ENCODE measurements at regions of chr3 and their contacts with region 1.

Region 1: DNA sequence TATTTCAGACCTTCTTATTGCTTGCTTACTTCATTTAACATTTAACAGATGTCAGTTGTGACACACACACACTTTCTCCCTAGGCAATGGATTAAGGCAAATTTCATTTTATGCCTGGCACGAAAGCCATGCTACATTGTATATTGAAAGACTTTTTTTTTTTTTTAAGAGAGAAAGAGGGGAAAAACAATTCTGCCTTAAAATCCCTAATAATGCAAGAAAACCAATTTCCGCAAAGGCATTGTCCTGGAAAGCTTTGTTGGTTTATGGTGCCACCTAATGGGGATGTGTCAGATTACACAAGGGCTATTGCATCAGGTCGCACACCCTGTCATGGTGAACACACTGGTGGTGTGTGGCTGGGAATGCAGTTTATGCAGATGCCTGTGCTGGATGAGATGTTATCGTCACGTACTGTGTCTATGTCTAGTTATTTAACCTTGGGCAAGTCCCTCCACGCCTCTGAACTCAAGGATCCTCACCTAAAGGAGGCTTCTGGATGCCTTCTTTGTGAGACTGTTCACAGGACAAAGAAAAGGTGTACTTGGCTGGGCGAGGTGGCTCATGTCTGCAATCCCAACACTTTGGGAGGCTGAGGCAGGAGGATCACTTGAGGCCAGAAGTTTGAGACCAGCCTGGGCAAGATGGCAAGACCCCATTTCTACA is 37.3 kb upstream of the RFTN1 start:
- DNase-seq: peak; percentile 60
- CTCF ChIP-seq: peak; percentile 82

Region 2: GRCh38 chr3:16279010-16279801 is 271.6 kb before region 1 on chr3:
- in situ Hi-C with region 1: loop called (anchors 10 kb)
- DNase-seq: no peak
- CTCF ChIP-seq: no peak

Measured in GM13976 (cell line).